ENCODE measurements at regions of chr19 and their contacts with region 1.

Region 1: GRCh38 chr19:19776041-19777008 is 43.4 kb upstream of the ZNF14 start:
- DNase-seq: peak; percentile 91

Region 2: DNA sequence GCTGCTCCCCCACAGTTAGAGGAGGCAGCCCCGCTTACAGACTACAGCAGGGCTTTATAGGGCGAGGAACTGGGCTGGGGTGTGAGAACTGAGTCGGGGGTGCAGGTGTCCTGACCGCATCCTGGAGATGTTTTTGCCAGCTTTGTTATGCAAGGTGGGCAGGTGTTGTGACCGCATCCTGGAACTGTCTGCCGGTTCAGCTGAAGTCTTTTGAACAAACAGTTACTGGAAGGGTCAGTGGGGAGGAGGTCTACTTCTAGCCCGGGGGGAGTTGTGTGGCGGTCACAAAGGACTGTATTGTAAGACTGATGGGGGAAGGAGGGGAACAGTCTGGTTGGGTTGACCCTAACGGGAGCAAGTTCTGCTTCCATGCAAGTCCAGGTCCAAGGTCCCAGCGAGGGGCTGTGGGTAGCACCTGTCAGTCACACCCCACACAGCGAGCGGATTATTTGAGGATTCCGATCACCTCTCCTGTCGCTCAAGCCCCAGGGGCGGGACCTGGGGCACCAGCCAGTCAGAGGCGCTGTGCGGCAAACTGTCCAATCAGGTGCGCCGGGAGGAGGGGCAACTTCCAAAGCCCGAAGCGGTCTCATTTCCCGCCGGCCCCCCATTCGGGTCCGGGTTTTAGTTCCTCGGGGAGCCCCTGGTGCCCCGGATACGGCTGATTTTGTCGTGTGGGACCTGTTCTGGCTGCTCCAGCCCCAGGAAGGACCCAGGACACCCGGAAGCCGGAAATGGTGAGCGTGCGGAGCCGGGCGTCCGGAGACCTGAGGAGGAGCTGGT is 107.9 kb before region 1 on chr19 and contains the start of gene ZNF101:
- CTCF ChIA-PET with region 1: no interaction called
- POLR2A ChIA-PET with region 1: interaction called, 13 read pairs
- DNase-seq: peak; percentile 89

Region 3: DNA sequence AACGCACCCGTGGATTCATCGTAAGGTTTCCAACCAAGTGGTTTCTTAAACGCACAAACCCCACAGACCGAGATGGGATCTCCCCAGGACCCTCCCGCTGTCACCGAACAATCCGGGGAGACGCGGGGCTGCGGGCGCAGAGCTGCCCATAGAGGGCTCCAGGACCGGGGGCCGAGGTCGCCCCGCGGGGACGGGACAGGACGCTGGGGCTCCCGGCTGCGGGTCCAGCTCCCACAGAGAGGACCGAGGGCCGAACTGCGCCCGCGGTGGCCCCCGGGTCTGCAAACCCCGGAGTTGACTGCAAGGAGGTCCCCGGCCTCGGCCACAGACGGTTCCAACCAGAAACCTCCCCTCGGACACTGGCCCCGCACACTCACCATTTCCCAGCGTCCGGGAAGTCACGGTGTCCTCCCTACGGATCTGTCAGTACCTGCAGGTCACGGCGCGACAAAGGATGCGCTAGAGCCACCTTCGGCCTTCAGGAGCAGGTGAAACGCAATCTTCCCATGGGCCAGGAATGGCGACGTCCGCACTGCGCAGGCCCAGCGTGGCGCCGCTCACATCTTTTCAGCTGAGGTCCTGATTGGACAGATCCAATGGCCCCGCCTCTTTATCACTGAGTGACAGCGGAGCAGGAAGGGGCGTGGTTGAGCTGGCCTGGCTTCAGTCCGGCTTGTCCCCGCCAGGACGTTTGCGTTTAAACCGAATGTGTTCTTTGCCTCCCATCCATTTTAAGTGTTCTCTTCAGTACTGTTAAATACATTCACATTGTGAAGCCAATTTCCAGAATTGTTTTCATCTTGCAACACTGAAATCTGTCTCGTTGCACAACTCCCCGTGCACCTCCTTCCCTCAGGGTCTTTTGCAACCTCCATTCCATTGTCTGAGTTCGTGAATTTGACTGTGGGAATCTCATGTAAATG is 43.5 kb before region 1 on chr19 and contains the start of gene ZNF14:
- CTCF ChIA-PET with region 1: no interaction called
- POLR2A ChIA-PET with region 1: interaction called, 22 read pairs
- DNase-seq: peak; percentile 98

Region 4: GRCh38 chr19:19743176-19743575 is 33.1 kb before region 1 on chr19:
- CTCF ChIA-PET with region 1: no interaction called
- POLR2A ChIA-PET with region 1: no interaction called
- DNase-seq: no peak